ENCODE measurements at regions of chr6 and their contacts with region 1.

Region 1: DNA sequence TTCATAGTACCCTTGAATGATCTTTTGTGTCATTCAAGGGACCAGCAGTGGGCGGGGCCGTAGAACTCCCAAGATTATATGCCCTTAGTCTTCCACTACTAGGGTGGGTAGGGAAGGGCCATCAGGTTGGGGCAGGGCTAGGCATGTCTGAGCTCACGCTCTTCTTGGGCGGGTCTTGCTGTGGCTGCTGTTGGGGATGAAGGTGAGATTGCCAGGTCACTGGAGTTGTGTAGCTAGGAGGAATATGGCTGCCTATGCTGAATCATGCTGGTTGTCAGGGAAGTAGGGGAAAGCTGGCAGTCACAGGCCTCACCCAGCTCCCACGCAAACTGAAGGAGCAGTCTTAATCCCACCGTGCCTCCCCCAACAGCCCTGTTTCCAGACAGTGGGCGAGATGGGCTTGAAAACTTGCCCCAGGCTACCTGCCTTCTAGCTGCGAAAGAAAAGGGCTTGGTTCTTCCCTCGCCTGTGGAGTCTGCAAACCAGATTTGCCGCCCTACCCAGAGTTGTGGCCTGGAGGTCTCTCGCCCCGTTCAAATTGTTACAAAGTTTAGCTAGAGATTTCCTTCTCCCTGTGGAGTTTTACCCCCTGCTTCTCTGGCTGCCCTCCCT is 76.4 kb upstream of the ADGRF4 start:
- DNase-seq: peak in 1 of 3 donors; percentile 7
- ATAC-seq: no peak
- H3K4me3 ChIP-seq: no peak overlapping the region
- H3K27ac ChIP-seq: no peak overlapping the region
- H3K4me1 ChIP-seq: no peaks in the 10 kb centered on the region
- H3K27me3 ChIP-seq: no peaks in the 10 kb centered on the region

Region 2: GRCh38 chr6:47413752-47414422 is 208.1 kb before region 1 on chr6:
- intact Hi-C with region 1: loop called in 1 of 4 experiments (anchors 10 kb)
- DNase-seq: peak in 1 of 3 donors; percentile 11
- ATAC-seq: peak; percentile 89 to 90
- H3K4me3 ChIP-seq: peak overlapping the region; percentile 54
- H3K27ac ChIP-seq: no peak overlapping the region
- H3K4me1 ChIP-seq: no peaks in the 10 kb centered on the region
- H3K27me3 ChIP-seq: no peaks in the 10 kb centered on the region

Region 3: GRCh38 chr6:47669684-47670513 is 48.0 kb after region 1 on chr6:
- intact Hi-C with region 1: no loop called
- DNase-seq: no peak
- ATAC-seq: no peak
- H3K4me3 ChIP-seq: no peak overlapping the region
- H3K27ac ChIP-seq: no peak overlapping the region
- H3K4me1 ChIP-seq: no peaks in the 10 kb centered on the region
- H3K27me3 ChIP-seq: no peaks in the 10 kb centered on the region

Measured in right cardiac atrium (tissue), 5 donors.